Caco-2 (cell line): ENCODE measurements at regions of chr6 and their contacts with region 1.

Region 1: DNA sequence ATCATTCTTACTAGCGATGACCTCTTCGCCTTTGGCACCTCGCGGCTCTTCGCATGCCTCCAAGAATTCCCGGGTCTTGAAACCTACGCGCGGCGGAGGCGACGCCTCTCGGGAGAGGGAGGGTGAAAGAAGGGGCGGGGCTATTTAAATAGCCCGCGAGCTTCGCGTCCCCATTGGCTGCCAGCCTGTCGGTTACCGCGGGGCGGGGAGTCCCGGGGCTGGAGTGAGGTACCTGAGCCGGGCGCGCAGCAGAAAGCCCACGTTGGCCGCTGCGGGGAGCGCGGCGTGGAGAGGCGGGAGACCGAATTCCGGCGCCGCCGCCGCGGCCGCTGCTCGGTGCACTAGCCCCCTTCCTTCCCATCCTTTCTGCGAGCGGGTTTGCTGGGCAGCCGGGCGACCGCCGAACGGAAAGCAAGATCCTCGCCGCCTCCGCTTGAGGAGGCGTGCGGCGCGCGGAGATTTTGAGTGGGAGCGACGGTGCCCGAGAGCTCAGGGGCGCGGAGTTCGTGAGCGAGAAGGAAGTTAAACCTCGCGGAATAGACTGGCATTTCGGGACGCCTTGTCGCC is at the start of gene BMP6:
- DNase-seq: peak; percentile 91 to 92
- H3K4me3 ChIP-seq: peak within 1 kb of the TSS; percentile 42
- H3K4me3 Mint-ChIP-seq: peak within 1 kb of the TSS; percentile 77
- H3K27ac Mint-ChIP-seq: no peak within 1 kb of the TSS
- H3K4me1 ChIP-seq: peaks cover 15% of the 10 kb centered on the region; the same call in 1 of the 2 replicates
- H3K4me1 Mint-ChIP-seq: no peaks in the 10 kb centered on the region
- H3K27me3 ChIP-seq: peaks cover 6% of the 10 kb centered on the region
- H3K27me3 Mint-ChIP-seq: peaks cover 24% of the 10 kb centered on the region
- CTCF ChIP-seq: no peak
- total RNA-seq, gene BMP6: 0.39 and 0.61 TPM in 2 replicates

Region 2: DNA sequence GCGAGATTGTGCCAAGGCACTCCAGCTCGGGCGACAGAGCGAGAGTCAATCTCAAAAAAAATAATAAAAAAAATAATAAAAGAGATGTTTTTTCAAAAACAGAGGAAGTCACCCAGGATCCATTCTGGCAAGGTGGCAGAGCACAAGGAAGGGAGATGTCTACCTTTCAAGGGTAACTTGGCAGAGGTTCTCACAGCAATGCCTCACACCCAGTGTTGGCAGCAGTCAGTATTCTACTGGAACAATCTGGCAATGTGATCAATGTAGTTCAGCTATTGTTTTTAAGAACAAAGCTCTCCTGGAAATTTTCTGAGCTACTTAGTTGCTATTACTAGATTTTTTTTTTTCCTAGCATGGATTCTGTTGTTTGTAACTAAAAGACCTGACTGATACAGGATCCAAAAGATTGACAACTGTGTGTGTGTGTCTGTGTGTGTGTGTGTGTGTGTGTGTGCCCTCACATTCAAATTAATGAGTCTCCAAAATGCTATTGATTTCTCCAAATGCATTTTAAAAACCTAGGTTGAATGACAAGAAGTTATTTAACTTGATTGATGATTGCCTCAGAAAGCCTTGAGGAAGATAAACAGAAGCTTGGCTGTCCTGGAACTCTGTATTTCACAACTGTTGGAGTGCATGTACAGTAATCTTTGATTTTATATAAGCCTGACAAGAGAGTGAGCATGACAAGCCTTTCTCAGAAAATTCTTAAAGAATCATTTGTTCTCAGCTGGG is 732.3 kb before region 1 on chr6:
- CTCF ChIA-PET with region 1: interaction called, 11 read pairs
- POLR2A ChIA-PET with region 1: no interaction called
- intact Hi-C with region 1: no loop called
- DNase-seq: no peak
- H3K4me3 ChIP-seq: no peak overlapping the region
- H3K4me3 Mint-ChIP-seq: no peak overlapping the region
- H3K27ac Mint-ChIP-seq: no peak overlapping the region
- H3K4me1 ChIP-seq: peaks cover 13% of the 10 kb centered on the region
- H3K4me1 Mint-ChIP-seq: no peaks in the 10 kb centered on the region
- H3K27me3 ChIP-seq: no peaks in the 10 kb centered on the region
- H3K27me3 Mint-ChIP-seq: no peaks in the 10 kb centered on the region
- CTCF ChIP-seq: no peak

Region 3: GRCh38 chr6:7589949-7590917 is 135.7 kb before region 1 on chr6 and contains the start of gene SNRNP48:
- CTCF ChIA-PET with region 1: no interaction called
- POLR2A ChIA-PET with region 1: no interaction called
- intact Hi-C with region 1: no loop called
- DNase-seq: peak; percentile 92 to 94
- H3K4me3 ChIP-seq: peak within 1 kb of the TSS; percentile 92
- H3K4me3 Mint-ChIP-seq: peak within 1 kb of the TSS; percentile 87
- H3K27ac Mint-ChIP-seq: peak within 1 kb of the TSS; percentile 90
- H3K4me1 ChIP-seq: peaks cover 28% of the 10 kb centered on the region
- H3K4me1 Mint-ChIP-seq: peaks cover 48% of the 10 kb centered on the region
- H3K27me3 ChIP-seq: no peaks in the 10 kb centered on the region
- H3K27me3 Mint-ChIP-seq: no peaks in the 10 kb centered on the region
- CTCF ChIP-seq: no peak
- total RNA-seq, gene SNRNP48: 25.1 and 29.1 TPM in 2 replicates

Region 4: GRCh38 chr6:7647504-7647903 is 78.4 kb before region 1 on chr6:
- CTCF ChIA-PET with region 1: no interaction called
- POLR2A ChIA-PET with region 1: no interaction called
- intact Hi-C with region 1: no loop called
- DNase-seq: no peak
- H3K4me3 ChIP-seq: no peak overlapping the region
- H3K4me3 Mint-ChIP-seq: no peak overlapping the region
- H3K27ac Mint-ChIP-seq: no peak overlapping the region
- H3K4me1 ChIP-seq: peaks cover 6% of the 10 kb centered on the region; the same call in 1 of the 2 replicates
- H3K4me1 Mint-ChIP-seq: peaks cover 5% of the 10 kb centered on the region
- H3K27me3 ChIP-seq: no peaks in the 10 kb centered on the region
- H3K27me3 Mint-ChIP-seq: no peaks in the 10 kb centered on the region
- CTCF ChIP-seq: no peak

Region 5: DNA sequence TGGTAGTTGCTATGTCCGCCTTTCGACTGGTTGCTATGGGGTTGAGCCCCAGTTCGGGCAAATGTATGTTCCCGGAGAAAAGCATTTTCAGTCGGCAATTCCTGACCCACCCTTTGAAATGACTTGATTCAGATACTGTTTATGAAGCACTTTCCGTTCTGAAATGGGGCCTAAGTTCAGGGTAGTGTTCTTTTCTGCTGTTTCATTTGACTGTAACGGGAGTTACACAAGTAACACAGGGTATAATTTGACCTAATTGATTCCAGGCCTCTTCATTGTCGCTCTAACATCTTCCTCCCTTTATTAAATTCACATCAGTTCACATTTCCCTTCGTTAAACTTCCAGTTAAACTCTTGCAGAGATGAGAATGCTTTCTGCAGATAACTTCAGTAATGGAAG is 85.5 kb after region 1 on chr6:
- CTCF ChIA-PET with region 1: interaction called, 3 read pairs
- POLR2A ChIA-PET with region 1: no interaction called
- intact Hi-C with region 1: loop called (anchors 2 kb)
- DNase-seq: no peak
- H3K4me3 ChIP-seq: no peak overlapping the region
- H3K4me3 Mint-ChIP-seq: no peak overlapping the region
- H3K27ac Mint-ChIP-seq: no peak overlapping the region
- H3K4me1 ChIP-seq: no peaks in the 10 kb centered on the region
- H3K4me1 Mint-ChIP-seq: no peaks in the 10 kb centered on the region
- H3K27me3 ChIP-seq: no peaks in the 10 kb centered on the region
- H3K27me3 Mint-ChIP-seq: no peaks in the 10 kb centered on the region
- CTCF ChIP-seq: no peak

Region 6: GRCh38 chr6:7910654-7911344 is 184.9 kb after region 1 on chr6 and contains the start of gene TXNDC5:
- CTCF ChIA-PET with region 1: interaction called, 3 read pairs
- POLR2A ChIA-PET with region 1: no interaction called
- intact Hi-C with region 1: loop called (anchors 10 kb)
- DNase-seq: peak; percentile 72 to 85
- H3K4me3 ChIP-seq: peak within 1 kb of the TSS; percentile 77
- H3K4me3 Mint-ChIP-seq: peak within 1 kb of the TSS; percentile 80
- H3K27ac Mint-ChIP-seq: peak within 1 kb of the TSS; percentile 74
- H3K4me1 ChIP-seq: peaks cover 5% of the 10 kb centered on the region; the same call in 1 of the 2 replicates
- H3K4me1 Mint-ChIP-seq: no peaks in the 10 kb centered on the region
- H3K27me3 ChIP-seq: no peaks in the 10 kb centered on the region
- H3K27me3 Mint-ChIP-seq: no peaks in the 10 kb centered on the region
- CTCF ChIP-seq: no peak
- total RNA-seq, gene TXNDC5: 117 and 119 TPM in 2 replicates

Region 7: GRCh38 chr6:7992002-7992815 is 266.3 kb after region 1 on chr6:
- CTCF ChIA-PET with region 1: no interaction called
- POLR2A ChIA-PET with region 1: no interaction called
- intact Hi-C with region 1: loop called (anchors 1 kb)
- DNase-seq: peak in 1 of 2 experiments; percentile 36
- H3K4me3 ChIP-seq: no peak overlapping the region
- H3K4me3 Mint-ChIP-seq: no peak overlapping the region
- H3K27ac Mint-ChIP-seq: no peak overlapping the region
- H3K4me1 ChIP-seq: peaks cover 3% of the 10 kb centered on the region
- H3K4me1 Mint-ChIP-seq: peaks cover 7% of the 10 kb centered on the region
- H3K27me3 ChIP-seq: no peaks in the 10 kb centered on the region
- H3K27me3 Mint-ChIP-seq: no peaks in the 10 kb centered on the region
- CTCF ChIP-seq: peak in 1 of 2 experiments; percentile 47

Region 8: DNA sequence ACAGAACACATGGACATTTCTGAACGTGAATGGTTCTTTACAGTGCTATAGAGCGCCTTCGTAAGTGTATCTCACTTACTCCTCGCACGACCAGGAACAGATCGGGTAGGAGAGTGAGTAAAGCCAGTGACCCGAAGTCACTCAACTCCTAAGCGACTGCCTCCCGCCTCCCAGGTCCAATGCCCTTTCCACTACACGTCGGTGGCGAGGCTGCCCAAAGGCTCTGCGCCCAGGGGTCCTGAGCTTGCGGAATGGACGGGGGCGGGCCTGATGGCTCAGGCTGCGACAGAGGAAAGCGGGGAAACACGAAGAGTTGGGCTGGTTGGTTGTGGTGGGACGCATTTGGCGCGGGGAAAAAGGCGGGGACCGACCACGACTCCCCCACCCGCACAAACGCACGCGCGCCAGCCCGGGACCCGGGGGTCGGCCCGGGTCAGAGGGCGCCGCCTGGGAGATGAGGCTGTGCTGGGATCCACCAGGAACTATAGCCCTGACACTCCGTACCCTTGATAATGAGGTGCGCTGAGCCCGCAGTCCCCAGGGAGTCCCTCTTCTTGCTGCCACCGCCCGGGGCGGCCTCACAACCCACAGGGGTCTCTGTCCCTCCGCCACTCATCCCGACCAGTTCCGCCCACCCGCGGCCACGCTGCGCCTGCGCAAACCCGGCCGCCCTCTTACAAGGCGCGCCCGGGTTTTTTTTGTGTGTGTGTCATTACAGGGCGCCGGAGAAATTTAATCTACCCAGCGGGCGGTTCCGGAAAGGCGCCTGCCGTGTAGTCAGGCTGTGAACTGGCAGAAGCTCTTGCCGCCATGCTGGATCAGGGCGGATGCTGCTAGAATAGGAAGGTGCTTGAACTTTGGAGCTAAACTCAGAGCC is 338.1 kb after region 1 on chr6 and contains the start of gene BLOC1S5:
- CTCF ChIA-PET with region 1: interaction called, 7 read pairs
- POLR2A ChIA-PET with region 1: no interaction called
- intact Hi-C with region 1: loop called (anchors 2 kb)
- DNase-seq: peak; percentile 98
- H3K4me3 ChIP-seq: peak within 1 kb of the TSS; percentile 77
- H3K4me3 Mint-ChIP-seq: peak within 1 kb of the TSS; percentile 97
- H3K27ac Mint-ChIP-seq: peak within 1 kb of the TSS; percentile 96
- H3K4me1 ChIP-seq: peaks cover 19% of the 10 kb centered on the region
- H3K4me1 Mint-ChIP-seq: peaks cover 21% of the 10 kb centered on the region
- H3K27me3 ChIP-seq: no peaks in the 10 kb centered on the region
- H3K27me3 Mint-ChIP-seq: no peaks in the 10 kb centered on the region
- CTCF ChIP-seq: no peak
- total RNA-seq, gene BLOC1S5: 15.0 and 16.4 TPM in 2 replicates